ENCODE measurements at regions of chr3 and their contacts with region 1.

Region 1: GRCh38 chr3:56357266-56357665 is 111.0 kb downstream of the ERC2 start:
- DNase-seq: no peak
- H3K27ac ChIP-seq: no peak overlapping the region
- CTCF ChIP-seq: no peak

Region 2: GRCh38 chr3:56238299-56238698 is 119.0 kb before region 1 on chr3:
- CTCF ChIA-PET with region 1: no interaction called
- POLR2A ChIA-PET with region 1: no interaction called
- DNase-seq: no peak
- H3K27ac ChIP-seq: no peak overlapping the region
- CTCF ChIP-seq: no peak

Region 3: DNA sequence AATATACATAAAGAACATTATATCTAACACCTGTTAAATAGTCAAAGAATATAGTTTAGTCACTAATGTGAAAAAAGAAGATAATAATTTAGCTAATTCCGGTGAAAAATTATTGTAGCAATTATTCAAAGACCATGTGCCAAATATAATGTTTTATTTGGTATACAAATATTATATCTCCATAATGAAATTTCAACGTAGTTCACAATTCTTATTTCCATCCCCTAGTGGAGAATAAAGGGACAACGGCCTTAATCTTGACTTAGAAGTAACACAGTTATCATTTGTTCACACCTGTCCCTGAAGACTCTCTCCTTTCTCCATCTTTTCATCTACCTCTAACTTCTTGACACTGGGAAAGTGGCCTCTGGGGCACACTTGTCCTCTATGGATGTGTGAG is 102.4 kb before region 1 on chr3:
- CTCF ChIA-PET with region 1: no interaction called
- POLR2A ChIA-PET with region 1: no interaction called
- DNase-seq: no peak
- H3K27ac ChIP-seq: no peak overlapping the region
- CTCF ChIP-seq: peak; percentile 37

Region 4: DNA sequence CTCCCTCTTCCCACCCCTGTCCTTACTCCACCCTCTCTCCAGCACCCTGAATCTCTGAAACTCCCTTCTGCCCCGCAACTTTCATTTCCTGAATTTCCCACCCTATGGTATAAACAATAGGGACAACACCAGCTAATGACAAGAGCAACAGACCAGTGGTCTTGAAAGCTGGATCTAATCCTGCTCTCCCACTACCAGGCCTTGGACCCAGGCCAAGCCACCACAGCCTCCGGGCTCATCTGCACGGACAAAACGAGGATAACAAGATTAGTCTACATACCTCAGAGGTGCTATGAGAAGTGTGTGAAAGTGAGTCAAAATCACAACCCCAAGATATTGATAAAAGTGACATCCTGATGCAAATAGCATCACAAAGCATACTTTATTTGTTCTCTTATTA is 17.6 kb before region 1 on chr3:
- CTCF ChIA-PET with region 1: interaction called, 10 read pairs
- POLR2A ChIA-PET with region 1: no interaction called
- DNase-seq: no peak
- H3K27ac ChIP-seq: no peak overlapping the region
- CTCF ChIP-seq: no peak

Measured in RWPE1 (cell line).